Ascending aorta (tissue), 2 donors: ENCODE measurements at regions of chr6 and their contacts with region 1.

Region 1: DNA sequence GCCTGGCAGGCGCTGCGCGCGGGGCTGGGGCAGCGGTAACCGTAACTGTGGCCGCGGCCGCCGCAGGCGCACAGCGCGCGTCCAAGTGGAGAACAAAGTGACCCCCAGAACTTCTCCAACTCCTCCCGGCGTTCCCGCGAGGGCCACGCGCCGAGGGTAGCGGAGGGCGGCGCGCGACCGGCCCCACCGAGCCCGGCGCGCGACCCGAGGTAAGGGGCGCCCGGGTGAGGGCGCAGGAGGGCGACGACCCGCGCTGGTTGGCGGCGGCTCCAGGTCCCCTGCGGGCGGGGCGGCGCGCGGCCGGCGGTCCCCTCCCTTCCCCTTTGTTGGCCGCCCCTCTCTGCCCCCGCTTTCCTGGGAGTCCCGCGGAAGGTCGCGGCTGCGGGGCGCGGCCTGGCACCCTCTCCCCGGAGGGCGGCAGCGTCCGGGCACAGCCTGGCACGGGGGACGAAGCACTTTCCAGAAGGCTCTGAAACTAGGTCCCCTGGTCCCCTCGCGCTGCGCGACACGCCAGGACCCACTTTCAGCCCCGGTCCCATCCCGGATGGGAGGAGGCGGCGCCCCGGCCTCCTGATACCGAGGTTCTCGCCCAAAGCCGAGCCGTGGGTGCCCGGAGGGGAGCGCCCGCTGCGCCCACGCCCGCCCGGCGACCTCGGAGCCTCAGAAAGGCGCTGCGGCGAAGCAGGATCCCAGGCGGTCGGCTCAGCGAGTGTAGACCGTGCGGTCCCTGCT is at the start of gene TIAM2:
- DNase-seq: no peak
- H3K4me3 ChIP-seq: peak within 1 kb of the TSS; percentile 61 to 78
- H3K27ac ChIP-seq: peak within 1 kb of the TSS; percentile 62 to 78
- H3K4me1 ChIP-seq: no peaks in the 10 kb centered on the region
- H3K27me3 ChIP-seq: no peaks in the 10 kb centered on the region
- CTCF ChIP-seq: no peak
- total RNA-seq, gene TIAM2: 3.7 TPM

Region 2: GRCh38 chr6:154928325-154928922 is 67.0 kb before region 1 on chr6:
- intact Hi-C with region 1: loop called (anchors 5 kb)
- DNase-seq: peak in 1 of 2 donors; percentile 79
- H3K4me3 ChIP-seq: no peak overlapping the region
- H3K27ac ChIP-seq: no peak overlapping the region
- H3K4me1 ChIP-seq: no peaks in the 10 kb centered on the region
- H3K27me3 ChIP-seq: no peaks in the 10 kb centered on the region
- CTCF ChIP-seq: peak; percentile 66 to 81 (median 68)

Region 3: GRCh38 chr6:155079985-155080452 is 84.6 kb after region 1 on chr6:
- intact Hi-C with region 1: loop called (anchors 5 kb)
- DNase-seq: no peak
- H3K4me3 ChIP-seq: no peak overlapping the region
- H3K27ac ChIP-seq: no peak overlapping the region
- H3K4me1 ChIP-seq: peaks cover 2 to 20% of the 10 kb centered on the region in 2 donors
- H3K27me3 ChIP-seq: no peaks in the 10 kb centered on the region
- CTCF ChIP-seq: no peak

Region 4: GRCh38 chr6:155143029-155143577 is 147.7 kb after region 1 on chr6:
- intact Hi-C with region 1: loop called (anchors 10 kb)
- DNase-seq: no peak
- H3K4me3 ChIP-seq: peak overlapping the region; percentile 36 to 58
- H3K27ac ChIP-seq: peak overlapping the region; percentile 53 to 69
- H3K4me1 ChIP-seq: peaks cover 2 to 10% of the 10 kb centered on the region in 2 donors
- H3K27me3 ChIP-seq: no peaks in the 10 kb centered on the region
- CTCF ChIP-seq: no peak